Prostate gland (tissue), 2 donors: ENCODE measurements at regions of chr3 and their contacts with region 1.

Region 1: GRCh38 chr3:5122030-5122740 is at the start of gene ARL8B:
- DNase-seq: peak; percentile 83
- H3K4me3 ChIP-seq: peak within 1 kb of the TSS; percentile 99 to 100
- H3K27ac ChIP-seq: peak within 1 kb of the TSS; percentile 89 to 95
- H3K4me1 ChIP-seq: no peaks in the 10 kb centered on the region
- H3K27me3 ChIP-seq: no peaks in the 10 kb centered on the region
- CTCF ChIP-seq: peak; percentile 71 to 98 (median 94)
- POLR2A ChIP-seq: peak; percentile 78
- total RNA-seq, gene ARL8B: 42.9 to 43.1 TPM

Region 2: GRCh38 chr3:4712143-4712542 is 410.0 kb before region 1 on chr3:
- intact Hi-C with region 1: no loop called
- DNase-seq: peak; percentile 76
- H3K4me3 ChIP-seq: no peak overlapping the region
- H3K27ac ChIP-seq: peak overlapping the region; percentile 26 to 65
- H3K4me1 ChIP-seq: no peaks in the 10 kb centered on the region
- H3K27me3 ChIP-seq: no peaks in the 10 kb centered on the region
- CTCF ChIP-seq: no peak
- POLR2A ChIP-seq: no peak

Region 3: GRCh38 chr3:4977001-4977852 is 145.0 kb before region 1 on chr3:
- intact Hi-C with region 1: no loop called
- DNase-seq: peak; percentile 47
- H3K4me3 ChIP-seq: peak overlapping the region; percentile 68 to 69
- H3K27ac ChIP-seq: peak overlapping the region; percentile 98
- H3K4me1 ChIP-seq: peaks cover 8% of the 10 kb centered on the region
- H3K27me3 ChIP-seq: no peaks in the 10 kb centered on the region
- CTCF ChIP-seq: no peak
- POLR2A ChIP-seq: peak; percentile 24

Region 4: DNA sequence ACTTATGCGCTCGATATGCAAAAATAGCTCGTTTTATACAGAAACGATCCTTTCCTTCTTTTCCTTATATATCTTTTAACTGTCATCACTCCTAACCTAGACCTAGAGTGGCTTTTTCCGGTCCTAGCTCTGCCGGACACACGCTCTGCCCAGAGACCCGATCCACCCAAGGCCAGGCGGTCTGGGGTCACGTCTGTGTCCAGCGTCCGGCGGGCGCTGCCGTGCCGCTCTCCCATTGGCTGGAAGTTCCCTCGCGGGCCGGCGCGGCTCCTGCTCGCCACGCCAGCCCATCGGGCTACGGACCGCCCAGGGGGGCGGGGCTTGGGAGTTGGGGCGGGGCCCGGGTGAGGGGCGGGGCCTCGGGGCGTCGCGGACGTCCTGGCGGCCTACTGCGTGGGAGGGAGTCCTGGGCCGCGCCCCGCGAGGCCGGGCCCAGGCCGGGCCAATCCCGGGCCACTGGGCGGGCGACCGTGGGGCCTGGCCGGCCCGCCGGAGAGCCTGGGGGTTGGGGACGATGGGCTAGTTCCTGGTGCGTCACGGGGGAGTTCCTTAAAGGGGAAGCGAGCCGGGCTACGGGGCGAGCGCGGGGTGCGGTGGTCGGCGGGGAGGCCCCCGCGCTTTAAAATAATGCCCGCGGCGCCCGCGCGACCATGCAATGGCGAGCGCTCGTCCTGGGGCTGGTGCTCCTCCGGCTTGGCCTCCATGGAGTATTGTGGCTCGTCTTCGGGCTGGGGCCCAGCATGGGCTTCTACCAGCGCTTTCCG is 65.2 kb after region 1 on chr3 and contains the start of gene EDEM1:
- intact Hi-C with region 1: loop called (anchors 5 kb)
- DNase-seq: peak; percentile 93
- H3K4me3 ChIP-seq: peak within 1 kb of the TSS; percentile 95 to 96
- H3K27ac ChIP-seq: peak within 1 kb of the TSS; percentile 90 to 92
- H3K4me1 ChIP-seq: no peaks in the 10 kb centered on the region
- H3K27me3 ChIP-seq: no peaks in the 10 kb centered on the region
- CTCF ChIP-seq: no peak
- POLR2A ChIP-seq: peak; percentile 93
- total RNA-seq, gene EDEM1: 40.5 to 63.1 TPM

Region 5: GRCh38 chr3:5357089-5357488 is 234.9 kb after region 1 on chr3:
- intact Hi-C with region 1: no loop called
- DNase-seq: no peak
- H3K4me3 ChIP-seq: no peak overlapping the region
- H3K27ac ChIP-seq: no peak overlapping the region
- H3K4me1 ChIP-seq: no peaks in the 10 kb centered on the region
- H3K27me3 ChIP-seq: no peaks in the 10 kb centered on the region
- CTCF ChIP-seq: no peak
- POLR2A ChIP-seq: no peak